Naive thymus-derived CD4-positive, alpha-beta T cell (primary cell): ENCODE measurements at regions of chr15 and their contacts with region 1.

Region 1: GRCh38 chr15:31013538-31014228 is 22.3 kb upstream of the MTMR10 start:
- DNase-seq: peak in 6 of 9 donors; percentile 10 to 64 (median 45)
- ATAC-seq: peak; percentile 77
- H3K4me3 ChIP-seq: no peak overlapping the region
- H3K4me3 Mint-ChIP-seq: peak overlapping the region in 9 of 10 donors; percentile 7 to 68 (median 51)
- H3K27ac ChIP-seq: peak overlapping the region; percentile 1
- H3K27ac Mint-ChIP-seq: peak overlapping the region; percentile 39 to 94 (median 81)
- H3K4me1 ChIP-seq: peaks cover 0 to 15% of the 10 kb centered on the region in 2 donors
- H3K4me1 Mint-ChIP-seq: peaks cover 13 to 24% (median 23%) of the 10 kb centered on the region in 7 donors
- H3K27me3 ChIP-seq: no peaks in the 10 kb centered on the region
- H3K27me3 Mint-ChIP-seq: peaks cover 0 to 17% (median 4%) of the 10 kb centered on the region in 5 donors

Region 2: GRCh38 chr15:30962079-30962478 is 51.6 kb before region 1 on chr15:
- CTCF ChIA-PET with region 1: no interaction called
- POLR2A ChIA-PET with region 1: no interaction called
- intact Hi-C with region 1: loop called in 1 of 2 experiments (anchors 5 kb)
- DNase-seq: no peak
- ATAC-seq: no peak
- H3K4me3 ChIP-seq: no peak overlapping the region
- H3K4me3 Mint-ChIP-seq: peak overlapping the region in 1 of 10 donors; percentile 36
- H3K27ac ChIP-seq: no peak overlapping the region
- H3K27ac Mint-ChIP-seq: peak overlapping the region in 6 of 9 donors; percentile 43 to 80 (median 72)
- H3K4me1 ChIP-seq: peaks cover 0 to 8% of the 10 kb centered on the region in 2 donors
- H3K4me1 Mint-ChIP-seq: peaks cover 8 to 44% (median 36%) of the 10 kb centered on the region in 7 donors
- H3K27me3 ChIP-seq: no peaks in the 10 kb centered on the region
- H3K27me3 Mint-ChIP-seq: no peaks in the 10 kb centered on the region

Region 3: DNA sequence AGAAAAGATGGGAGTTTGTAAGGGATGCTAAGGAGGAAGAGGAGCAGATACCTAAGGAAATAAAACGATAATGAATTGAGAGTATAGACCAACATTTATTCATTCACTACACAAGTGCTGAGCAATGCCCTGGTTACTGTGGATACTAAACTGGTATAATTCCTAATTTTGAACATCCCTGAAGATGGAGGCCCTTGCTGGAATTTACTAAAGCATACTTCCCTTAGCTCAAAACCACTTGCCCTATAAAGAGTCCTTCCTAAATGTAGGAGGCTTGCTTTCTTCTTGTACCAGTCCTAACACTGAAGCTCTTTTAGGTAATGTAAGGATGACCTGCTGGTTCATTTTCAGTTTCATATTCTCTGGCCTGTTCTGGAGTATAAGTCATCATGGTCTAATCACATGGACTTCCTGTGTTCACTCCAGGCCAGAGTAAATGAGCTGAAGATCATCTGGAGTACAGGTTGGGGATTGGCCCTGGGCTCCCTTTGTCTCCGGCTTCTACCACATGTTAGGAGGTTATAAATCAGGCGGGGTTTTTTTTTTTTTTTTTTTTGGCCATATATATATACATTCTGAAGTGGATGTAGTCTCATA is 17.9 kb after region 1 on chr15:
- CTCF ChIA-PET with region 1: no interaction called
- POLR2A ChIA-PET with region 1: no interaction called
- intact Hi-C with region 1: loop called in 1 of 2 experiments (anchors 1 kb)
- DNase-seq: no peak
- ATAC-seq: peak; percentile 29
- H3K4me3 ChIP-seq: no peak overlapping the region
- H3K4me3 Mint-ChIP-seq: no peak overlapping the region
- H3K27ac ChIP-seq: no peak overlapping the region
- H3K27ac Mint-ChIP-seq: no peak overlapping the region
- H3K4me1 ChIP-seq: no peaks in the 10 kb centered on the region
- H3K4me1 Mint-ChIP-seq: peaks cover 0 to 6% (median 0%) of the 10 kb centered on the region in 7 donors
- H3K27me3 ChIP-seq: no peaks in the 10 kb centered on the region
- H3K27me3 Mint-ChIP-seq: peaks cover 0 to 26% (median 11%) of the 10 kb centered on the region in 5 donors